ENCODE measurements at regions of chr2 and their contacts with region 1.

Region 1: DNA sequence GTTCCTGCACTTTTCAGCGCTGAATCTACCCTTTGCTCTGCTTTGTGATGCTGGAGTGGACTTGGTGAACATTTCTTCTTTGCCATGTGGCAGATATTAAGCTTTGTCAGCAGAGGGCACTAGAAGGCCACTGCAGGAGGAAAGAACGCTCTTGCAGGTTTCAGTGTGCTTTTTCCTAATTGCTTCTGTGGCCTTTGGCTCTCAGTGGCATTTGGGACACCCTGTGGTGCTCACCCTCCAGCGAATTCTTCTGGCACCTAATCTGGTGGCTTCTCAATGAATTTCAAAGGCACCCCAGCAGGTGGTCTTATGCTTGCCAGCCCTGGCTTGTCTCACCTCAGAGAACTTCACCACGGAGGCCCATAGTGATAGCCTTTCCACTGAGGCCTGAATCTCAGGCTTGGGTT is 146.7 kb downstream of the MYO3B start:
- DNase-seq: peak; percentile 67 to 75
- H3K4me3 ChIP-seq: no peak overlapping the region
- H3K27ac ChIP-seq: no peak overlapping the region
- H3K4me1 ChIP-seq: no peaks in the 10 kb centered on the region
- H3K27me3 ChIP-seq: no peaks in the 10 kb centered on the region
- CTCF ChIP-seq: peak; percentile 19 to 95 (median 95)
- EP300 ChIP-seq: peak in 1 of 2 experiments; percentile 28; a peak in 1 of 3 replicates
- POLR2A ChIP-seq: no peak
- RAD21 ChIP-seq: peak; percentile 99

Region 2: GRCh38 chr2:170235860-170236679 is 88.6 kb before region 1 on chr2:
- CTCF ChIA-PET with region 1: interaction called, 16 read pairs
- POLR2A ChIA-PET with region 1: no interaction called
- DNase-seq: peak in 1 of 2 experiments; percentile 55
- H3K4me3 ChIP-seq: no peak overlapping the region
- H3K27ac ChIP-seq: no peak overlapping the region
- H3K4me1 ChIP-seq: peaks cover 0 to 4% (median 1%) of the 10 kb centered on the region in 4 experiments; a peak in 2 of 7 replicates
- H3K27me3 ChIP-seq: no peaks in the 10 kb centered on the region
- CTCF ChIP-seq: peak in 2 of 3 experiments; percentile 69 to 72; a peak in 3 of 4 replicates
- EP300 ChIP-seq: no peak
- POLR2A ChIP-seq: no peak
- RAD21 ChIP-seq: peak; percentile 86 to 94

Region 3: GRCh38 chr2:170276902-170277629 is 47.6 kb before region 1 on chr2:
- CTCF ChIA-PET with region 1: no interaction called
- POLR2A ChIA-PET with region 1: no interaction called
- DNase-seq: no peak
- H3K4me3 ChIP-seq: no peak overlapping the region
- H3K27ac ChIP-seq: no peak overlapping the region
- H3K4me1 ChIP-seq: no peaks in the 10 kb centered on the region
- H3K27me3 ChIP-seq: no peaks in the 10 kb centered on the region
- CTCF ChIP-seq: no peak
- EP300 ChIP-seq: no peak
- POLR2A ChIP-seq: no peak
- RAD21 ChIP-seq: no peak

Region 4: DNA sequence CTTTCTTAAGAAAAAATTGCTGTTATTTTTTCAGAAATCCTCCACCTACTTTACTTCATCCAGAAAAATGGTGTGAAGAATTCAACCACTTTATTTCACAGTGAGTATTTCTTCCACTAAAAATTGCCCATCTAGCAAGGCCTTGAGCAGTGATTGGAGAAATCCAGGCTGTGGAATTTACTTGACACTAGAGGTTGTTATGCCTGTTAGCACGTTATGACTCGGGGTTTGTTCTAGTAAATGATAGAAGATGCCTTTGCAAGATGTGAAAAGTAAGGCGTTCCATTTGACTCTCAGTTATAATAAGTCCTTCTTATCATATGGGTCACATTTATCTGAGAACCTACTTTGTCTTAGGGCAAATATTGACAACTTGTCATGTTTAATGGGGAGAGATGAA is 10.7 kb after region 1 on chr2:
- CTCF ChIA-PET with region 1: interaction called, 22 read pairs
- POLR2A ChIA-PET with region 1: interaction called, 3 read pairs
- DNase-seq: no peak
- H3K4me3 ChIP-seq: no peak overlapping the region
- H3K27ac ChIP-seq: no peak overlapping the region
- H3K4me1 ChIP-seq: peaks cover 0 to 9% (median 4%) of the 10 kb centered on the region in 4 experiments; a peak in 4 of 7 replicates
- H3K27me3 ChIP-seq: no peaks in the 10 kb centered on the region
- CTCF ChIP-seq: no peak
- EP300 ChIP-seq: no peak
- POLR2A ChIP-seq: no peak
- RAD21 ChIP-seq: no peak

Region 5: DNA sequence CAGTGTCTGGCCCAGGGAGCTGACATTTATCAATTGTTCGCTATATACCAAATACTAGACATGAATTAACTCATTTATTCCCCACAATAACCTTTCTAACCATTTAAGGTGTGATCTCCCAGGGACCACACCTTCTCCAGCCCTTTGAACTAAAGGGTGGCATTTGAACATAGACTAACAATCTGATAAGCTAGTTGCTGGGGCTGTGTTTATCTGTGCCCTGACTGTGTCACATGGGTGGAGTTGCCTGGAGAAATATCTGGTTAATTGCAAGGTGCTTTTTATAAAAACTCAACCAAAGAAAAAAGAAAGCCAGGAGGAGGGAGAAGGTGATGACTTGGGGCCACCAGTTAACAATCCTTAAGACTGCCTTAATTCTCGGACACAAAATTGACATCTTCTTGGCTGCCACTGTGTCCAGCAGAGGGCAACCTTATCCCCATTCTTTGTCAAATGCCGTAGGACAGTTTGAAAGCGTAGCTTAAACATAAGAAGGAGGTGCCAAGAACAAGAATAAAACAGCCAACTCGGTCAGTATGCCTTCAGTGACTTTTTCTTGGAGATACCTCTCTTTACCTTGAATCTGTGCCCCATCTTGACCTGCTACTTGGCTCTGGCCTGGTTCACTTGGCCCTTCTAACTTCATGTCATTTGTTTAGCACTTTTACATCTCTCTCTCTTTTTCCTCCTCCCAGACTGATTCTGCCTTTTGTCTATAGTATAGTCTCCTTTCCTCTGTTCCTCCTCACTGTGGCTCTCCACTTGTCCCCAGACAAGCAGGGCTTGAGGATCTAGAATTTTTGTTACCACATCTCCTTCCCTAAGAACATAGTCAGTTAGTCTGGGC is 36.7 kb after region 1 on chr2:
- CTCF ChIA-PET with region 1: interaction called, 23 read pairs
- POLR2A ChIA-PET with region 1: no interaction called
- DNase-seq: peak; percentile 21 to 69
- H3K4me3 ChIP-seq: no peak overlapping the region
- H3K27ac ChIP-seq: no peak overlapping the region
- H3K4me1 ChIP-seq: peaks cover 0 to 7% (median 2%) of the 10 kb centered on the region in 4 experiments; a peak in 3 of 7 replicates
- H3K27me3 ChIP-seq: no peaks in the 10 kb centered on the region
- CTCF ChIP-seq: peak; percentile 32 to 85 (median 72)
- EP300 ChIP-seq: no peak
- POLR2A ChIP-seq: no peak
- RAD21 ChIP-seq: peak; percentile 74 to 84

Region 6: GRCh38 chr2:170377500-170378207 is 53.0 kb after region 1 on chr2:
- CTCF ChIA-PET with region 1: interaction called, 10 read pairs
- POLR2A ChIA-PET with region 1: no interaction called
- DNase-seq: no peak
- H3K4me3 ChIP-seq: no peak overlapping the region
- H3K27ac ChIP-seq: no peak overlapping the region
- H3K4me1 ChIP-seq: 0 out of 7 replicates have a peak, but pooled peaks cover 0 to 2% (median 0%) of the 10 kb centered on the region in 4 experiments
- H3K27me3 ChIP-seq: no peaks in the 10 kb centered on the region; a peak in 2 of 7 replicates
- CTCF ChIP-seq: no peak
- EP300 ChIP-seq: no peak
- POLR2A ChIP-seq: no peak
- RAD21 ChIP-seq: no peak

Measured in H1 (cell line).